PC-3 (cell line): ENCODE measurements at regions of chr10 and their contacts with region 1.

Region 1: DNA sequence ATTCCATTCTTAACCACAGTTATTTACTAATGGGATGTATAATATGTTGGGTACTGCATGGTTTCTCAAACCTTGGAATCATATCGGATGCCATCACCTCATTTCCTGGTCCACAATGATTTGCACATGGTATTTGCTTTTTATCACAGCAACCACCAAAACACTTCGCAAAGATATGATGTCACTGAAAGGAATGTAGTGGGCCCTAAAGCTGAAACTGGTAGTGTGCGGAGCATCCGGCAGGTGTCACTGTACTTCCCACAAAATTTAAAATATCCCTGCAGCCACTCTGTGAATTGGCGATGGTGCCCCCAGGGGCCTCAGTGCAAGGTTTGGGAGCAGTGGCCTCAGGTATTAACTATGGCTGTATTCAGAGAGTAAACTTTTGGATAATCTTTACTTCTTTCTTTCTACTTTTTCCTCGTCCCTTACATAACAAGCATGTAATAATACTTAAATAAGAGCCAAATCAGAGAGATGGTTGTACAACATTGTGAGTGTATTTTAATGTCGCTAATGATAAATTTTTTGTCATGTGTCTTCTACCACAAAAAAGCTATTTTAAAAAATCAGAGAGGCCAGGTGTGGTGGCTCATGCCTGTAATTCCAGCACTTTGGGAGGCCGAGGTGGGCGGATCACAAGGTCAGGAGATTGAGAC is 66.2 kb downstream of the FAM241B start:
- DNase-seq: peak; percentile 98
- ATAC-seq: peak; percentile 94
- H3K4me3 ChIP-seq: no peak overlapping the region
- H3K27ac ChIP-seq: peak overlapping the region; percentile 17
- H3K4me1 ChIP-seq: peaks cover 7% of the 10 kb centered on the region
- H3K27me3 ChIP-seq: peaks cover 17% of the 10 kb centered on the region; the same call in 1 of the 2 replicates
- CTCF ChIP-seq: peak; percentile 98

Region 2: GRCh38 chr10:69644658-69645295 is 51.4 kb before region 1 on chr10:
- CTCF ChIA-PET with region 1: interaction called, 3 read pairs
- POLR2A ChIA-PET with region 1: no interaction called
- intact Hi-C with region 1: loop called (anchors 1 kb)
- DNase-seq: peak; percentile 89
- ATAC-seq: peak; percentile 68
- H3K4me3 ChIP-seq: no peak overlapping the region
- H3K27ac ChIP-seq: no peak overlapping the region
- H3K4me1 ChIP-seq: peaks cover 10% of the 10 kb centered on the region
- H3K27me3 ChIP-seq: no peaks in the 10 kb centered on the region
- CTCF ChIP-seq: peak; percentile 100

Region 3: DNA sequence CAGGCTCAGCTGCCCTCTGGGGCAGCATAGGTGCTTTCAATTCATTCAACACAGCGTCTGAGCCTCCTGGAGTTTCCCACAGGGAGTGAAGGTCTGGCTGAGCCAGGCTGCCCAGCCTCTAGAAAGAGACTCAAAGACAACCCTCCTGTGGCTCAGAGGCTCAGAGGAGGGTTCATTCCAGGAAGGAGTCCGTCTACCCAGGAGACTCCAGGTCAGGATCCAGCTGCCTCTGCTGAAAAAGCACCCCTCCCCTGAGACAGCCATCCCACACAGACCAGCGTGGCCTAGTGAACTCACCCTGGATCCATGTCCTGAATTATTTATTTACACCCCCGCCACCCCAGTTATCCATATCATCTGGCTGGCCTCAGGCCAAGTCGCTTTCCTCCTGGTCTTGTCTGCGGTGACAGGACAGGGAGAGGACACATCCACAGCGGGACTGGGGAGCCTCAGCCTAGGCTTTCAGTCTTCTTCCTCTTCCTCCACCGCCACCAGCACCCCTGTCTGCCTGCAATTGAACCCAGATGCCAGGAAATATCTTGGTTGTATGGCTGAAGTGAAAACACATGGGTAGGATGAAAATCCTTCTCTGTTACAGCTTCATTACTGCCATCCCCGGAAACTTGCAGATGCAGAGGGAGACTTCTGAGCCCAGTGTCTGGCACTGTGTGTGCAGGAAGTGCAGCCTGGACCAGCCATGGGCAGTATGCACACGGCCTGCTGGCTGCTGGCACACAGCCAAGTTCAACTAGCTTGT is 61.5 kb after region 1 on chr10:
- CTCF ChIA-PET with region 1: no interaction called
- POLR2A ChIA-PET with region 1: no interaction called
- intact Hi-C with region 1: no loop called
- DNase-seq: peak; percentile 47
- ATAC-seq: peak; percentile 35; the same call in 1 of the 2 replicates
- H3K4me3 ChIP-seq: no peak overlapping the region
- H3K27ac ChIP-seq: no peak overlapping the region
- H3K4me1 ChIP-seq: no peaks in the 10 kb centered on the region
- H3K27me3 ChIP-seq: peaks cover 13% of the 10 kb centered on the region; the same call in 1 of the 2 replicates
- CTCF ChIP-seq: no peak